ENCODE measurements at regions of chr2 and their contacts with region 1.

Region 1: DNA sequence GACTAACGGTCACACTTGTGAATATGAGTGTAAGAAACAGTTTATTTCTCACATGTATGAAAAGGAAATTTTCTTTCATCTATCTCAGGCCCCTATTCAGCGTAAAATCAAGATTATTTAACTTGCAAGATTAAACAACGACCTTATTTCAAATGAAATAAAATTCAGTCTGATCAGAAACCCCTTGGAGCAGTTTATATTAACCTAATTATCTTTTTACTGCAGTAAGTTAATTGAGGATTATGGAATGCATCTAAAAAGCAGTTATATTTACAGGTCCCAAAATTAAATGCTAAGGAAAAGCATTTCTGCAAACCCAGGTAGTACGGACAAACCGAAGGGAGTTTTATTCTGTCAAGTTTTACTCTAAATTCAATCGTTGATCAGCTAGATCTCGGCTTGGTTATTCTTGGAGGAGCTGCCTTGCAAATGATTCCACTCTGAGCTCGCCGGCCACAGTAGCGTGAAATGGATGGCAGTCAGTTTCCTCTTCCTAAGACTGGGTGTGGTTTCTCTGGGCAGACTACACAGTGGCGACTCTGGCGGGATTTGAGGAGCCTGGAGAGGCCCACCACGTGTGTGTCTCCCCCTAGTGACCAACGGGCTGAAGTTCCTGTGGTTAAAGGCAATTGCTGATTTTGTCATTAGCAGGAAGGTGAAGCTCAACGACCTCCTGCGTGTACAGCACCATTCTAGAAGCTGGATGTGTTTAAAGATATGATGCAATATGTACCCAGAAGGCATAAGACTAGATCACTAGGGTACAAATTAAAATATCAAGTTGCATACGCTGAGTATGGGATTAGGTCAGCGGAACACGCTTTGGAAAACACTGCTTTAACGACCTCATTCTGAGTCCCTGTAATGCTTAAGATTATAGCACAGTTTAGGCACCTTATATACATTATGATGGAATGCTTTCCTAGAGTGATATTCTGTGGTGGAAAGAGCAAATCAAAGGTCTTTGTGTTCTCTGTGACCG is 36.4 kb downstream of the PRKRA start:
- DNase-seq: peak; percentile 87 to 95
- ATAC-seq: peak; percentile 92 to 96 (median 94)
- H3K4me3 ChIP-seq: peak overlapping the region; percentile 73
- H3K27ac ChIP-seq: peak overlapping the region; percentile 84
- H3K4me1 ChIP-seq: peaks cover 8% of the 10 kb centered on the region
- H3K27me3 ChIP-seq: no peaks in the 10 kb centered on the region
- CTCF ChIP-seq: peak; percentile 79

Region 2: GRCh38 chr2:178112202-178113152 is 302.1 kb before region 1 on chr2 and contains the start of gene RBM45:
- intact Hi-C with region 1: loop called (anchors 2 to 10 kb)
- DNase-seq: peak; percentile 95 to 97
- ATAC-seq: peak; percentile 97 to 98 (median 98)
- H3K4me3 ChIP-seq: peak within 1 kb of the TSS; percentile 93
- H3K27ac ChIP-seq: peak within 1 kb of the TSS; percentile 77
- H3K4me1 ChIP-seq: peaks cover 14% of the 10 kb centered on the region
- H3K27me3 ChIP-seq: no peaks in the 10 kb centered on the region
- CTCF ChIP-seq: peak; percentile 98
- total RNA-seq, gene RBM45: 4.4 to 6.5 (median 4.8) TPM

Measured in psoas muscle (tissue), 8 donors.